Activated T-helper 2 cell treated with anti-CD3 and anti-CD28 coated beads, Interferon-gamma antibody, Interleukin-2, Interleukin-4, amounts not matched to agents 10 μg/mL and 5 μg/mL and 100 μg/mL, durations not matched to agents 14 hours and 24 hours and 36 hours (primary cell): ENCODE measurements at regions of chr7 and their contacts with region 1.

Region 1: DNA sequence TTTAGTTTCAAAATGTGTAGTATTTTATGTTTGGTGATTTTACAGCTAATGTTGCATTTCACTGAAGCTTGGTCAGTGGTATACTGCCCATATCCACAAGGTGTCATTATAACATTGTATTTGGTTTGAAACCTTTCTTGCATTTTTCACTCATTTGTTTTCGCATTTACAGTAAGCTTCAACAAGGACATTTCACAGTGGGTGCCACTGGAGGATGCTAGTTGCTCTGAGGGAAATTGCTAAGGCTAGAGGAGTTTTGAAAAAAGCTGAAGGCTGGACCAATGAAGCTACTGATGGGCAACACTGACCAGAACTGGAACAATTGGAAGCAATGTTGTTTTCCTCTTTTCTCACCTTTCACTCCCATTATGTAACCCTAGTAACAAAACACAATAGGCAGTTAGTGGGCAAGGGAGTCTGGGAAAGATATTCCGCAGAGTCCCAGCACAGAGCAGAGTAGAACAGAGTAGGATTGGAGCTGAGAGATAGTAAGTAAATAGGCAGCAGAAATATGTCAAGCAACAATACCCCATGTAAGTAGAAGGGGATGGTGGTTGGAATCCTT is 23.6 kb upstream of the SRI start:
- DNase-seq: no peak
- H3K4me3 Mint-ChIP-seq: no peak overlapping the region
- H3K27ac Mint-ChIP-seq: no peak overlapping the region
- H3K4me1 Mint-ChIP-seq: no peaks in the 10 kb centered on the region
- H3K27me3 Mint-ChIP-seq: peaks cover 20% of the 10 kb centered on the region

Region 2: GRCh38 chr7:88203401-88203800 is 40.0 kb before region 1 on chr7:
- intact Hi-C with region 1: no loop called
- DNase-seq: no peak
- H3K4me3 Mint-ChIP-seq: no peak overlapping the region
- H3K27ac Mint-ChIP-seq: no peak overlapping the region
- H3K4me1 Mint-ChIP-seq: peaks cover 31% of the 10 kb centered on the region
- H3K27me3 Mint-ChIP-seq: no peaks in the 10 kb centered on the region

Region 3: DNA sequence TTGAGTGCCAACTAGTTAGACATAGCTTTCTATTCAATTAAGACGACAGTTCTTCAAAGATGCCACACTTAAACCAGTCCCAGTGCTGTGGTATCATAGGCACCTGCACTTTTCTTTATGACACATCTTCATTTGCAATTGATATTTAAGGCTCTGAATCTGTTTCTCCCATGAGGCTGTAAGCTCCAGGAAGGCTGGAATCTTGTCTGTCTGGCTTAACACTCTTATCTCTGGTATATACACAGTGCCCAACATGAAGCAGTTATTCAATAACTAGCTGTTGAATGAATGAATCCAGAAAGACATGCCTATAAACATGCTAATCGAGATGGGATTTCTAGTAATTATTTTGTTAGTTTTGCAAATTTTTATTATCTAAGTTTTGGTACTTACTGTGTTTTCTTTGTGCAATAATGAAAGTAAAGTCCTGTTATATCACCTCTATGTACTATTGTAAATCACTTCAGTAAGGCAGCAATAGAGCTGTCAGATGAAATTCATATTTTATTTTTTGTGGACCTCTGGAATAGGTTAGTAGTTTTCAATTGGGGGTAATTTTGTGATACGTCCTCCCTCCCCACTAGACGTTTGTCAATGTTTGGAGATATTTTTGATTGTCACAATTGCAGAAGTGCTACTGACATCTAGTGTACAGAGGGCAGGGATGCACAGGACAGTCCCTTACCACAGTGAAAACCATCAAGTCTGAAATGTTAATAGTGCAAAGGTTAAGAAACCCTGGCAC is 114.5 kb after region 1 on chr7:
- intact Hi-C with region 1: loop called (anchors 1 kb)
- DNase-seq: no peak
- H3K4me3 Mint-ChIP-seq: no peak overlapping the region
- H3K27ac Mint-ChIP-seq: no peak overlapping the region
- H3K4me1 Mint-ChIP-seq: no peaks in the 10 kb centered on the region
- H3K27me3 Mint-ChIP-seq: peaks cover 12% of the 10 kb centered on the region

Region 4: DNA sequence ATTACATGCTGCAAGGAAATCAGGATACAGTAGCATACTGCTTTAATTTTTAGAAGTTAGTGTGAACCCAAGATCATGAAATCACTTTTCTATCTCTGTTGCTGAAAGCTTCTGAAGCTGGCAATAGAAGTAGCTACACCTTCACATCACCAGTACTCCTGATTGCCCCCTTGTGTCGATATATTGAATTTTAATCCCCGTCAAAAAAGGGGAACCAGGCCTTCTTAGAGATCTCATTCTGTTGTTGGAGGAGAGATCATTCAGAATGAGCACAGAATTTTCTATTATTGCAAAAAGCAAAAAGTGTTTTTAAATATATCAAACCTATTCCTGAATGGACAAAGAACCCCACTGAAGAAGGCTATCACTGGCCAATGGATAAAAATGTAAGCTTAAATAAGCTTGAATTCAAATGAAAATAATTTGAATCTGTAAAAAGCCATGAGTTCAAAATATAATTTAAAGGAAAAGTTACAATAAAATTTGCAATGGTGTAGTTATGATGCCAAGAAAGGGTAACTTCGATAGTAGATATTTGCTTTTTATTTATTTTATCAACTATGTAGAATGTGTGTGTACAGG is 591.8 kb after region 1 on chr7:
- intact Hi-C with region 1: loop called (anchors 2 kb)
- DNase-seq: no peak
- H3K4me3 Mint-ChIP-seq: no peak overlapping the region
- H3K27ac Mint-ChIP-seq: no peak overlapping the region
- H3K4me1 Mint-ChIP-seq: no peaks in the 10 kb centered on the region
- H3K27me3 Mint-ChIP-seq: no peaks in the 10 kb centered on the region

Region 5: GRCh38 chr7:89622838-89623672 is 1379.6 kb after region 1 on chr7:
- intact Hi-C with region 1: loop called (anchors 5 kb)
- DNase-seq: no peak
- H3K4me3 Mint-ChIP-seq: no peak overlapping the region
- H3K27ac Mint-ChIP-seq: no peak overlapping the region
- H3K4me1 Mint-ChIP-seq: peaks cover 22% of the 10 kb centered on the region
- H3K27me3 Mint-ChIP-seq: no peaks in the 10 kb centered on the region